ENCODE measurements at regions of chr5 and their contacts with region 1.

Region 1: DNA sequence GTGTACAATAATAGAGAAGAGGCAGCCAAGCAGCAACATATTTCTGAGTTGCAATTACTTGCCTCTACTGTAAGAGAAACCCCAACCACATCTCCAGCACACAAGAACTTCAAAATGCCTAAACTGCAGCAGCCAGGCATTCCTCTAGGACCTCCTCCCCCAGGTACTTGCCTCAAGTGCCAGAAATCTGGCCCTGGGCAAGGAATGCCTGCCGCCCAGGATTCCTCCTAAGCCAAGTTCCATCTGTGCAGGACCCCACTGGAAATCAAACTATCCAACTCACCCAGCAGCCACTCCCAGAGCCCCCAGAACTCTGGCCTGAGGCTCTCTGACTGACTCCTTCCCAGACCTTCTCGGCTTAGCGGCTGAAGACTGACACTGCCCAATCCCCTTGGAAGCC is 336.8 kb upstream of the RGMB start:
- DNase-seq: no peak
- ATAC-seq: no peak
- H3K4me3 ChIP-seq: no peak overlapping the region
- H3K27ac ChIP-seq: no peak overlapping the region
- H3K4me1 ChIP-seq: no peaks in the 10 kb centered on the region
- H3K27me3 ChIP-seq: no peaks in the 10 kb centered on the region
- CTCF ChIP-seq: no peak

Region 2: GRCh38 chr5:98354922-98355321 is 81.7 kb before region 1 on chr5:
- intact Hi-C with region 1: no loop called
- DNase-seq: no peak
- ATAC-seq: no peak
- H3K4me3 ChIP-seq: no peak overlapping the region
- H3K27ac ChIP-seq: no peak overlapping the region
- H3K4me1 ChIP-seq: no peaks in the 10 kb centered on the region
- H3K27me3 ChIP-seq: no peaks in the 10 kb centered on the region
- CTCF ChIP-seq: no peak

Region 3: DNA sequence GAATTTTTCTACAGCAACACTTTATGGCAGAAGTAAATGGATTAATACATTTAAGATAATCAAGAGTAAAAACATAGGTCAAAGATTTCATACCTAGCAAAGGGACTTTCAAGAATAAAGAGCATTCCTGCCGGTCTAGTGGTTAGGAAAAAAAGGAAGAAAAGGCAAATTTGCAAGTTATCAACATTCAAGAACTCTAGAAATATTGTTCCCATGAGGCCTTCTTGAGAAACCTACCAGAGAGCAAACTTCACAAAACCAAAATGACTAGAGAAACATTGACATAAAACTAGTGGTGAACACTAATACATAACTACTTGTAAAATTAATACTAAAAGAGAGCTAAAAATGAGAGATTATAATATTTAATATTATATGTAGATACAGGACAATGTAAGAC is 16.6 kb after region 1 on chr5:
- intact Hi-C with region 1: loop called in 1 of 2 experiments (anchors 1 kb)
- DNase-seq: no peak
- ATAC-seq: no peak
- H3K4me3 ChIP-seq: no peak overlapping the region
- H3K27ac ChIP-seq: no peak overlapping the region
- H3K4me1 ChIP-seq: no peaks in the 10 kb centered on the region
- H3K27me3 ChIP-seq: no peaks in the 10 kb centered on the region
- CTCF ChIP-seq: no peak